Activated CD4-positive, alpha-beta T cell treated with anti-CD3 and anti-CD28 coated beads, Interleukin-2, amount 10 ng/mL, durations not matched to agents 7 days and 5 days (primary cell): ENCODE measurements at regions of chr1 and their contacts with region 1.

Region 1: DNA sequence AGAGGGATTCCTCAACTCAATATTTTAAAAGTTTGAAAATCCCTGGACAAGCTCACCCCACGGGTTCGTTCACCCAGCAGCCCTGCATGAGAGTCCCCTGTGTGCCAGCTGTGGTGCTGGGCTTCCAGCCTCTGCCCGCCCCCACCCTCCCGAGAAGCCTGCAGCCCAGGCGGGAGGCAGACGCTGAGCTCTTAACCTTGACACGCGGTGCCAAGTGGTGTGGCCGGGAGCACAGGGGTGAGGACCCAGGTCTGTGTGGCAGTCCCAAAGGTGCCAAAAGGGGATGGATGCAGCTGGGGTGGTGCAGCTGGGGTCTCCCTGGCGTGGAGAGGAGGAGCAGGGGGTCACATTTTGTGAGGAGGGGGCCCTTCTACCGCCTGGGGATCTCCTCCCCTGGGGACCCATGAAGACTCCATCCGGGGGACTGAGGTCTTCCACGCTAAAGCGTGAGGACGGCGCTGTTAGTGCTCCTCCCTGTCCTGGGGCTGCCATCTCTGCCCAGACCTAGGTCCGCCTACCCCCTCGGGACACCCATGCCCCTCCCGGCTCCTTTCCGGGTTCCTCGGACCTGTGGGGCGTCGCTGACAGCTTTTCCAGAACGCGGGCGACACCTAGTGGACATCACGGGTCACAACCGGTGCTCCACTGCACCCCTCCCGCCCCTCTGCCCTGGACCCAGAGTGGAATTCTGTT is 12.9 kb downstream of the PLA2G2F start:
- DNase-seq: peak; percentile 83
- H3K4me3 Mint-ChIP-seq: peak overlapping the region; percentile 62
- H3K27ac Mint-ChIP-seq: peak overlapping the region; percentile 48
- H3K4me1 Mint-ChIP-seq: peaks cover 21% of the 10 kb centered on the region
- H3K27me3 Mint-ChIP-seq: no peaks in the 10 kb centered on the region

Region 2: GRCh38 chr1:19918057-19918456 is 234.0 kb before region 1 on chr1:
- CTCF ChIA-PET with region 1: interaction called, 17 read pairs
- POLR2A ChIA-PET with region 1: no interaction called
- DNase-seq: peak; percentile 86
- H3K4me3 Mint-ChIP-seq: no peak overlapping the region
- H3K27ac Mint-ChIP-seq: no peak overlapping the region
- H3K4me1 Mint-ChIP-seq: peaks cover 2% of the 10 kb centered on the region
- H3K27me3 Mint-ChIP-seq: no peaks in the 10 kb centered on the region

Region 3: DNA sequence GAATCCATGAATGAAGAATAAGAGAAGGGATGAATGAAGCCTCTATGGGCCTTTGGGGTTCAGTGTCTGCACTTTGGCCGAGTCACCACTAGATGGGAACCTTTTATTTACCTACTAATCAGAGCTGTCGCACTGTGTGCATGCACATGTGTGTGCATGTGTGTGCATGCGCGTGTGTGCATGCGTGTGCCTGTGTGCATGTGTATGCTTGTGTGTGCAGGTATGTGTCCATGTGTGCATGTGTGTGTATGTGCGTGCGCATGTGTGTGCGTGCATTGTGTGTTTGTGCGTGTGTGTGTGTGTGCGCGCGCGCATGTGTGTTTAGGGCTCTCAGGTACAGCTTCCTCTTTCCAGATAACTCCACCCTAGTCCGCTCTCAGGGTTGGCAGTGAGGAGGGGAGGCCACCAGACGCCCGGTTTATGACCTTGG is 13.5 kb after region 1 on chr1:
- CTCF ChIA-PET with region 1: interaction called, 22 read pairs
- POLR2A ChIA-PET with region 1: no interaction called
- DNase-seq: no peak
- H3K4me3 Mint-ChIP-seq: no peak overlapping the region
- H3K27ac Mint-ChIP-seq: no peak overlapping the region
- H3K4me1 Mint-ChIP-seq: no peaks in the 10 kb centered on the region
- H3K27me3 Mint-ChIP-seq: peaks cover 2% of the 10 kb centered on the region

Region 4: DNA sequence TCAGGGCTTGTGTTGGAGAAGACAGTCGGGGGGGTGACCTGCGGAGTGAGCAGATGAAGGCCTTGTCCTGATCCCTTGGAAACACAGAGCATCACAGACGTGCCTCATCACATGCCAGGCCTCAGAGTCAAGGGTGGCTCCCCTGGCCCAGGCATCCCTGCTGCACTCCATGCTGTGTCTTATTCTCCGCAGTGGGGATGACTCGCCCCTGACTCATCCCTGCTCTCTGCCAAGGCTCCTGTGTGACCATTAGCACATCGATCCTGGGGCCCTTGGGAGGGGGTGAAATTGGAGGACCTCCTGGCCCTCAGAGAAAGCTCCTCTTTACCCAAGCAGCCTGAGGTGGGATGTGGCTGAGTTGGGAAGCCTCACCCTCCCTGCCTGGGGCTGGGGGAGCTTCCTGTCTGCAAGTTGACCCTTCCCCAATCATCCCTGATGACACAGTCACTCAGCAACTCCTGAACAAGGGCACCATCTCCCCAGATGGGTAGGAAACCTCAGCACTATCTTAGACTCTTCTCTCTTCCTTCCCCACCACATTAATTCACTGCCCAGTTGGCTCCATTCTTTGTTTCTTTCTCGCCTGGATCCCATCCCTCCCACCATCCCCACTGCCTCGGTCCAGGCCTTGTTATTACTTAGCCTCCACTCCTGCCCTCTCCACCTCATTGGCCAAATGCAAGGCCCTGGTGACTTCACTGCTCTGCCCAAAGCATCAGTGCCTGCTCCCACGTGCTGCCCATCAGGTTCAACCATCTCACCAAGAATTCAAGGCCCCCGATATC is 259.3 kb after region 1 on chr1:
- CTCF ChIA-PET with region 1: no interaction called
- POLR2A ChIA-PET with region 1: no interaction called
- DNase-seq: no peak
- H3K4me3 Mint-ChIP-seq: no peak overlapping the region
- H3K27ac Mint-ChIP-seq: no peak overlapping the region
- H3K4me1 Mint-ChIP-seq: peaks cover 3% of the 10 kb centered on the region
- H3K27me3 Mint-ChIP-seq: peaks cover 17% of the 10 kb centered on the region